Heart left ventricle (tissue), 16 donors: ENCODE measurements at regions of chr2 and their contacts with region 1.

Region 1: GRCh38 chr2:149087751-149088150 is 49.3 kb downstream of the LYPD6B start:
- DNase-seq: no peak
- ATAC-seq: no peak
- H3K4me3 ChIP-seq: no peak overlapping the region
- H3K27ac ChIP-seq: no peak overlapping the region
- H3K4me1 ChIP-seq: peaks cover 0 to 7% (median 0%) of the 10 kb centered on the region in 12 donors
- H3K27me3 ChIP-seq: no peaks in the 10 kb centered on the region
- CTCF ChIP-seq: peak in 1 of 12 donors; percentile 19
- POLR2A ChIP-seq: no peak

Region 2: GRCh38 chr2:149050188-149050587 is 37.6 kb before region 1 on chr2:
- intact Hi-C with region 1: no loop called
- DNase-seq: no peak
- ATAC-seq: no peak
- H3K4me3 ChIP-seq: no peak overlapping the region
- H3K27ac ChIP-seq: no peak overlapping the region
- H3K4me1 ChIP-seq: no peaks in the 10 kb centered on the region
- H3K27me3 ChIP-seq: peaks cover 0 to 7% (median 0%) of the 10 kb centered on the region in 9 donors
- CTCF ChIP-seq: no peak
- POLR2A ChIP-seq: no peak

Region 3: GRCh38 chr2:149136111-149136510 is 48.4 kb after region 1 on chr2:
- intact Hi-C with region 1: loop called in 1 of 10 experiments (anchors 5 kb)
- DNase-seq: no peak
- ATAC-seq: no peak
- H3K4me3 ChIP-seq: no peak overlapping the region
- H3K27ac ChIP-seq: no peak overlapping the region
- H3K4me1 ChIP-seq: no peaks in the 10 kb centered on the region
- H3K27me3 ChIP-seq: peaks cover 0 to 5% (median 0%) of the 10 kb centered on the region in 9 donors
- CTCF ChIP-seq: no peak
- POLR2A ChIP-seq: no peak